Dorsolateral prefrontal cortex (tissue), 120 donors: ENCODE measurements at regions of chr7 and their contacts with region 1.

Region 1: GRCh38 chr7:129825496-129826267 is 127.1 kb downstream of the UBE2H start:
- DNase-seq: peak; percentile 72 to 92 (median 84)
- H3K4me3 ChIP-seq: peak overlapping the region; percentile 54 to 92 (median 77)
- H3K27ac ChIP-seq: peak overlapping the region in 37 of 59 donors; percentile 12 to 84 (median 57)
- H3K27me3 ChIP-seq: no peaks in the 10 kb centered on the region
- CTCF ChIP-seq: peak; percentile 85 to 99 (median 95)

Region 2: GRCh38 chr7:129218514-129219062 is 607.1 kb before region 1 on chr7:
- intact Hi-C with region 1: loop called in 1 of 2 experiments (anchors 5 kb)
- DNase-seq: peak; percentile 74 to 92 (median 84)
- H3K4me3 ChIP-seq: peak overlapping the region in 22 of 59 donors; percentile 0 to 55 (median 20)
- H3K27ac ChIP-seq: no peak overlapping the region
- H3K27me3 ChIP-seq: no peaks in the 10 kb centered on the region
- CTCF ChIP-seq: peak; percentile 83 to 98 (median 95)

Region 3: DNA sequence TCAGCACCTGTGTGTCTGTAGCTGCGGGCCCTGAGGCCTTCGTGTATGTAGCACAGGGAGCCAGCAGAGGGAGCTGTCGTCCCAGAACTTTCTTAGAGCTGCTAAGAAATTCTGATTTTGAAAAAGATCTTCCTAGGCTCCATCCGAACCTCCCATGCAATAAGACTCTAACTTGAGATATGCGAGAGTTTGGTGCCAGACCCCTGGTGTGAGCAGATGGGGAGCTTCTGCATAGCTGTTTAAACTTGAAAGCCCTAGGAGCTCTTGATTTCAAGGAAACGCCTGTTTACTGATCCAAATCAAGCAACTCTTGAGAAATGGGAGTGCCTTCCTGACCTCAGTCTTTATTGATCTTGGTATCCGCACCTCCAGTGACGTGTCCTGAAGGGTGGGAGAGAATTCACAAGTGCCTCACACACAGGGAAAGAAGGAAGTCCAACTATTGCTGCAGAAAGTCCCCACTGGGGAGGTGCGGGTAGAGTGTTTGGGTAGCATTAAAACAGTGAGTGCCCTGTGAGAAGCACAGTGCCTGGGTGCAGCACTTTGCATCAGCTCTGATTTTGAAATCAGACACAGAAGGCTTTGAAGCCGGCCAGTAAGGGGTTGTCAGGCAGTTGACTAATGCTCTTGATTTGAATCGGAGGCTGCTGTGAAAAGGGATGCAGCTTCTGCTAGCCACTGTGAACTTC is 457.8 kb before region 1 on chr7:
- intact Hi-C with region 1: loop called in 1 of 2 experiments (anchors 5 kb)
- DNase-seq: peak; percentile 66 to 87 (median 77)
- H3K4me3 ChIP-seq: peak overlapping the region in 35 of 59 donors; percentile 3 to 50 (median 24)
- H3K27ac ChIP-seq: peak overlapping the region in 39 of 59 donors; percentile 4 to 75 (median 54)
- H3K27me3 ChIP-seq: no peaks in the 10 kb centered on the region
- CTCF ChIP-seq: peak; percentile 71 to 97 (median 92)

Region 4: GRCh38 chr7:129611246-129612111 is 214.2 kb before region 1 on chr7 and contains the start of gene NRF1:
- intact Hi-C with region 1: loop called in 1 of 2 experiments (anchors 2 kb)
- DNase-seq: peak; percentile 66 to 91 (median 80)
- H3K4me3 ChIP-seq: peak within 1 kb of the TSS; percentile 60 to 97 (median 89)
- H3K27ac ChIP-seq: peak within 1 kb of the TSS; percentile 89 to 100 (median 98)
- H3K27me3 ChIP-seq: no peaks in the 10 kb centered on the region
- CTCF ChIP-seq: peak in 33 of 56 donors; percentile 10 to 55 (median 26)
- total RNA-seq, gene NRF1: 20.9 to 56.9 (median 34.7) TPM

Region 5: GRCh38 chr7:129644634-129645230 is 180.9 kb before region 1 on chr7:
- intact Hi-C with region 1: no loop called
- DNase-seq: no peak
- H3K4me3 ChIP-seq: no peak overlapping the region
- H3K27ac ChIP-seq: no peak overlapping the region
- H3K27me3 ChIP-seq: no peaks in the 10 kb centered on the region
- CTCF ChIP-seq: peak; percentile 36 to 81 (median 64)

Region 6: DNA sequence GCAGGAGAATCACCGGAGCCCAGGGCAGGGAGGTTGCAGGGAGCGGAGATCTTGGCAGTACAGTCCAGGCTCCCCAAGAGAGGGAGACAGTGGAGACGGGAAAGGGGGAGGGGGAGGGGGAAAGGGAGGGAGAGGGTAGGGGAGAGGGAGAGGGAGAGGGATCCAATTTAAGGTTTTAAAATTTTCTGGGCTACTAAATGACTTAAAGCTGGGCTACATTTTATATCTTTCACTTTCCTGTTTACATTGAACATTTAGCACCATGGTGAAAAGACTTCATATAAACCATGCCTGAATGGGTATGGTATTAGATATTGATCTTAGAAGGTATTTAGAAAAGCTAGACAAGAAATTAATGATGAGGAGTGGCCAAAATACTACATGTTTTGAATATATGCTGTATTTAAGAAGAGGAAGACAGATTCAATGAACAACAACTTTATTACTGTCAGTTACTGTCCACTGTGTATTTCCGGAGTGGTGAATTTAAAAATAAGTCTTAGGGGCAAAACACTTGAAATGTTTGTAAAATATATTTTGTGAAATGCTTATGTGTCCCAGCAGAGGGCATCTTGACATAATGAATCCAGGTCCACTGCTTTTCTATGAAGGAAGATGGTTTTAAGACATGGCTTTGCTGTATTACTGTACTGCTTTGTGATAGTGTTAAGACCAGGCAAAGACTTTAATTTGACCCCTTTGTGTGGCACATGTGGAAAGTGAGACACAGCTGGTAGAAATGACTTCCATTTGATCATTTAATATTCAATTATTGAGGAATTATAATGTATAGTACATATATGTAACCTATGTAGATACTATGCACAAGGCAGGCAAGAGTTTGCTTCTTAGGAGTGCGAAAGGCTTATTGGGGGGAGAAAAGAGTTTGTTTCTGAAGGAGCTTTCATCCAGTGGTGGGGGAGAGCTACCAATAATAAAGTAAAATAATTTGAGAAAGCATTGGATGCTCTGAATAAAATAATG is 161.4 kb before region 1 on chr7:
- intact Hi-C with region 1: loop called (anchors 1 to 5 kb)
- DNase-seq: no peak
- H3K4me3 ChIP-seq: no peak overlapping the region
- H3K27ac ChIP-seq: no peak overlapping the region
- H3K27me3 ChIP-seq: no peaks in the 10 kb centered on the region
- CTCF ChIP-seq: peak; percentile 26 to 77 (median 59)

Region 7: GRCh38 chr7:129952653-129953560 is 127.2 kb after region 1 on chr7 and contains the start of gene UBE2H:
- intact Hi-C with region 1: loop called (anchors 1 to 2 kb)
- DNase-seq: peak; percentile 89 to 96 (median 94)
- H3K4me3 ChIP-seq: peak within 1 kb of the TSS; percentile 65 to 99 (median 91)
- H3K27ac ChIP-seq: peak within 1 kb of the TSS; percentile 66 to 98 (median 94)
- H3K27me3 ChIP-seq: no peaks in the 10 kb centered on the region
- CTCF ChIP-seq: peak in 2 of 56 donors; percentile 12 to 21
- total RNA-seq, gene UBE2H: 66.1 to 118 (median 87.6) TPM

Region 8: DNA sequence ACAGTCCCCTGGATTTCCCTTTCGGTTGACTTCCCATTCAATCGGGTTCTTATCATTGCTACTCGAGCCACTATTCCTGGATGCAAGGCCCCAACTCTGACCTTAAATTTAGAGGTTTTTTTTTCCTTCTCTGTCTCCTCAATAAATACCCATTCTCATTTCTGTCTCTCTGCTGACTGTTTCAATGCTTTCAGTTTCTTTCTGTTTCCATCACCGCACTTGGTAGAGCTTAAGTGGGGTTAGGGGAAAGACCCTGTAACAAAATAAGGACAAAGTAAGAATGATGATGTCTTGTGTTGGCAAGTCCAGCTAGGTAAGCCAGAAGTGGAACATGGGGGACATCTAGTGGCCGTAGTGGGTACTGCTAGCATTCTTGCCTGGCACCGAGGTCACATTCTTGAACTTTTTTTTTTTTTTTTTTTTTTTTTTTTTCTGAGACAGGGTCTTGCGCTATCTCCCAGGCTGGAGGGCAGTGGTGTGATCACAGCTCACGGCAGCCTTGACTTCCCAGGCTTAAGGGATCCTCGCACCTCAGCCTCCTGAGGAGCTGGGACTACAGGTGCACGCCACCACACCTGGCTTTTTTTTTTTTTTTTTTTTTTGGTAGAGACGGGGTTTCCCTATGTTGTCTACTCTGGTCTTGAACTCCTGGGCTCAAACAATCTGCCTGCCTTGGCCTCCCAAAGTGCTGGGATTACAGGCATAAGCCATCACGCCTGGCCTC is 185.2 kb after region 1 on chr7:
- intact Hi-C with region 1: loop called (anchors 2 kb)
- DNase-seq: peak; percentile 55 to 91 (median 72)
- H3K4me3 ChIP-seq: no peak overlapping the region
- H3K27ac ChIP-seq: no peak overlapping the region
- H3K27me3 ChIP-seq: no peaks in the 10 kb centered on the region
- CTCF ChIP-seq: peak; percentile 76 to 94 (median 90)